ENCODE measurements at regions of chr17 and their contacts with region 1.

Region 1: DNA sequence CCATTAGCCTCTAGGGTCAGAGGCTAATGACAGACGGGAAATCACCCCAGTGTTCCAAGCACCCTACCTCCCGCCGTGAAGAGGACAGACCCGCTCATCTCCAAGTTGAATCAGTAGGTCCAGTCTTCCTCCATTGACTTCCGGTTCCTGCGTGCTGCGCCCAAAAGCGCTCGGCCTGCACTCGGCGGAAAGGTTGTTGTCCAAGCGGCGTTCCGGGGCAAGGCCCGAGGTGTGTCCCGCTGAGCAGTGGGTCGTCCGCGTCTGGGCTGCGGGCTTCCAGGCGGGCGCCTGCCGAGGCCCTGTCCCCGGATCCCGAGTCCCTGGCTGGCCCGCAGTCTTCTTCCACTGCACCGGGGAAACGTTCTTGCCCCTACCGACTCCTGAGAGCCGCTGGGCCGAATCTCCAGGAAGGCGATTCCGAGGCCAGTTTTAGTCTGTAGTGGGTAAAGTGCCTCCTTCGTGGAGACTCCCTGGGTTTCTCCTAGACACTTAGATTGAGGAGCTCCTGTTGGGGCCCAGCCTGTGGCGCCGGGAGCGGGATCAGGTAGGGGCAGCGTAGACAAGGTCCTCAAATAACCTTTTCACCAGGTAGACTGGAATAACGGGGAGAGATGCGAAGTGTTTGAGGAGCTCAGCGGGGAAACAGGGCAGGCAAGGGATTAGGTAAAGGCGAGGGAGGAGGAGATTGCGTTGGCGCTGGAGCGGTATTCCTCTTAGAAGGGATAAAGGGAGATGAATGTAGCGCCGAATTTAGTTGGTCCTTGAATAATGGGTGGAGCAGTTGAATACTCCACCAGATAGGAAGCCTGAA is at the start of gene TEFM:
- DNase-seq: peak; percentile 93 to 95
- ATAC-seq: peak; percentile 99
- H3K4me3 ChIP-seq: peak within 1 kb of the TSS; percentile 75 to 83
- H3K27ac ChIP-seq: peak within 1 kb of the TSS; percentile 72 to 78
- H3K4me1 ChIP-seq: no peaks in the 10 kb centered on the region
- H3K27me3 ChIP-seq: no peaks in the 10 kb centered on the region
- total RNA-seq, gene TEFM: 11.9 to 15.8 TPM

Region 2: GRCh38 chr17:30495586-30495985 is 410.7 kb before region 1 on chr17:
- intact Hi-C with region 1: no loop called
- DNase-seq: no peak
- ATAC-seq: no peak
- H3K4me3 ChIP-seq: no peak overlapping the region
- H3K27ac ChIP-seq: no peak overlapping the region
- H3K4me1 ChIP-seq: no peaks in the 10 kb centered on the region
- H3K27me3 ChIP-seq: no peaks in the 10 kb centered on the region

Region 3: GRCh38 chr17:30970831-30971567 is 64.7 kb after region 1 on chr17 and contains the start of gene RNF135:
- intact Hi-C with region 1: loop called (anchors 2 kb)
- DNase-seq: peak; percentile 92 to 94
- ATAC-seq: peak; percentile 95
- H3K4me3 ChIP-seq: peak within 1 kb of the TSS; percentile 71 to 78
- H3K27ac ChIP-seq: peak within 1 kb of the TSS; percentile 62 to 86
- H3K4me1 ChIP-seq: no peaks in the 10 kb centered on the region
- H3K27me3 ChIP-seq: no peaks in the 10 kb centered on the region
- total RNA-seq, gene RNF135: 18.8 to 32.4 TPM

Region 4: DNA sequence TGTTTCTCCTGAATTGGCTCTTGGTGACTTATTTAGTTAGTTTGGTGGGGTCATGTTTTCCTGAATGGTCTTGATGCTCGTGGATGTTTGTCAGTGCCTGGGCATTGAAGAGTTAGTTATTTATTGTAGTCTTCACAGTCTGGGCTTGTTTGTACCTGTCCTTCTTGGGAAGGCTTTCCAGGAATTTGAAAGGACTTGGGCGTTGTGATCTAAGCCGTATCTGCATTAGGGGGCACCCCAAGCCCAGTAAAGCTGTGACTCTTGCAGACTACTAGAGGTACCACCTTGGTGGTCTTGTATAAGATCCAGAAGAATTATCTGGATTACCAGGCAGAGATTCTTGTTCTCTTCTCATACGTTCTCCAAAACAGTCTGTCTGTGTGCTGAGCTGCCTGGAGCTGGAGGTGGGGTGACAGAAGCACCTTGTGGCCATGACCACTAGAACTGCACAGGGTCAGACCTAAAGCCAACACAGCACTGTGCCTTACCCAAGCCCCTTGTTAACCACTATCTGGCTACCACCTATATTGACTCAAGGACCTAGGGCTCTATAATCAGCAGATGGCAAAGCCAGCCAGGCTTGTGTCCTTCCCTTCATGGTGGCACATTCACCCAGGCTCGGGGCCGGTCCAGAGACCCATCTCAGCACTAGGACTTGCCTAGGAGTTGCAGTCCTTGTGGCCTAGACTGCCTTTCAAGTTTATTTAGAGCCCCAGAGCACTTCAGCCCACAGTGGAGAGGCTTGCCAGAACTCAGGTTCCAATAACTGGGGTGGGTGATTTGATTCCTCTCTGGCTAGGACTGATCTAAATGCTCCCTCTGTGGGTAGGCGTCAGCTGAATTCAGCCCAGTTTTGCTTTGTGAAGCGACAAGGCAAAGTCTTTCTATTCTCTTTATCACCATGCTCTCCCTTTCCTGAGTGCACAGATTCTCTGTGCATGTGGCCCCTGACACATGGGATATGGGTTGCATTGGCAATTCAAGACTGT is 75.5 kb after region 1 on chr17:
- intact Hi-C with region 1: no loop called
- DNase-seq: no peak
- ATAC-seq: no peak
- H3K4me3 ChIP-seq: no peak overlapping the region
- H3K27ac ChIP-seq: no peak overlapping the region
- H3K4me1 ChIP-seq: no peaks in the 10 kb centered on the region
- H3K27me3 ChIP-seq: no peaks in the 10 kb centered on the region

Region 5: DNA sequence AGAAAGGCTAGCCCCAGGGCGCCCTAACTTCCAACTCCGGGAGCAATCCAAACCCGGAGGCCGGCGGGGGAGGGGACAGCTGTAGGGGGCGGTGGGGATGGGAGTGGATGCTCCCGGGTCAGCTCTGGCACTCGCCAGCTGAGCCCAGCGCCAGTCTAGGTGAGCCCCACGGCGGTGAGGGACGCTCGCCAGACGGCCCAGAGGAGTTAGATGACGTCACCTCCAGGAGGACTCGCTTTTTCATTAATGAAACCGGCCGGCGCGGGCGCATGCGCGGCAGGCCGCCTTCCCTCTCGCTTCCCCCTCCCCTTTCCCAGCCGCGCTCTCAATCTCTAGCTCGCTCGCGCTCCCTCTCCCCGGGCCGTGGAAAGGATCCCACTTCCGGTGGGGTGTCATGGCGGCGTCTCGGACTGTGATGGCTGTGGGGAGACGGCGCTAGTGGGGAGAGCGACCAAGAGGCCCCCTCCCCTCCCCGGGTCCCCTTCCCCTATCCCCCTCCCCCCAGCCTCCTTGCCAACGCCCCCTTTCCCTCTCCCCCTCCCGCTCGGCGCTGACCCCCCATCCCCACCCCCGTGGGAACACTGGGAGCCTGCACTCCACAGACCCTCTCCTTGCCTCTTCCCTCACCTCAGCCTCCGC is 188.4 kb after region 1 on chr17 and contains the start of gene NF1:
- intact Hi-C with region 1: loop called in 1 of 2 experiments (anchors 10 kb)
- DNase-seq: peak; percentile 98 to 99
- ATAC-seq: peak; percentile 97
- H3K4me3 ChIP-seq: peak within 1 kb of the TSS; percentile 71 to 86
- H3K27ac ChIP-seq: peak within 1 kb of the TSS; percentile 64 to 77
- H3K4me1 ChIP-seq: peaks cover 0 to 5% of the 10 kb centered on the region in 2 donors
- H3K27me3 ChIP-seq: no peaks in the 10 kb centered on the region
- total RNA-seq, gene NF1: 74.5 to 93.9 TPM

Region 6: DNA sequence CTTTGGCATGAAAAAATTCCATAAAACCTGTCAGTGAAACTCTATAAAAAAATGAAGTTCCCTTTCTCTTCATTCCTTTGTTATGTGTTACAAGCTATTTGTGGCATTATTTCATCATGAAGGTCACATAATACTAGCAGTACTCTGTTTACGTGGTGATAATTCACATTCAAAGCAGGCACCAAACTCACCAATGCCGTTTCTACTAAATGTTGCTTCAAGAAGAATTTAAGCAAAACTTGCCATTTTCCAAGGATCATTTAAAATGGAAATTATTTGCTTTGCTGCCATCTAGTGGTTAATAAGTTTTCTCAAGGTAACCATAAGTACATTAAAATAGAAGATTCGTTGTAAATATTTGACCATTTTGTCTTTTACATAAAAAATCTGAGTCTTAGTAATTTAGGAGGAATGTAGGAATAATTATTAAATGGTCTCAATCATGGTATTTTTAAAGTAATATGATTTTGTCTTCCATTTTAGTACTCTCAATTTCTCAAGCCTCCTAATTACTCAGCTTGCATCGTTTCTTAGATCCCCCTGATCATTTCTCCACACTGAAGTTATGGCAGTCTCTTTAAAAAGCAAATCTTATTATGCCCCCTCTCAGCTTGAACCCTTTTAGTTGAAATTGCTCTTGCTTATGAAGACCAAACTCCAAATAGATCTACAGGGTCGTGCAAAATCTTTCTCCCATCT is 309.9 kb after region 1 on chr17:
- intact Hi-C with region 1: loop called in 1 of 2 experiments (anchors 10 kb)
- DNase-seq: no peak
- ATAC-seq: no peak
- H3K4me3 ChIP-seq: no peak overlapping the region
- H3K27ac ChIP-seq: no peak overlapping the region
- H3K4me1 ChIP-seq: no peaks in the 10 kb centered on the region
- H3K27me3 ChIP-seq: no peaks in the 10 kb centered on the region

Measured in aorta (tissue), 5 donors.